Activated CD8-positive, alpha-beta memory T cell treated with anti-CD3 and anti-CD28 coated beads, Interleukin-2, amount 10 ng/mL, durations not matched to agents 7 days and 5 days (primary cell): ENCODE measurements at regions of chr7 and their contacts with region 1.

Region 1: DNA sequence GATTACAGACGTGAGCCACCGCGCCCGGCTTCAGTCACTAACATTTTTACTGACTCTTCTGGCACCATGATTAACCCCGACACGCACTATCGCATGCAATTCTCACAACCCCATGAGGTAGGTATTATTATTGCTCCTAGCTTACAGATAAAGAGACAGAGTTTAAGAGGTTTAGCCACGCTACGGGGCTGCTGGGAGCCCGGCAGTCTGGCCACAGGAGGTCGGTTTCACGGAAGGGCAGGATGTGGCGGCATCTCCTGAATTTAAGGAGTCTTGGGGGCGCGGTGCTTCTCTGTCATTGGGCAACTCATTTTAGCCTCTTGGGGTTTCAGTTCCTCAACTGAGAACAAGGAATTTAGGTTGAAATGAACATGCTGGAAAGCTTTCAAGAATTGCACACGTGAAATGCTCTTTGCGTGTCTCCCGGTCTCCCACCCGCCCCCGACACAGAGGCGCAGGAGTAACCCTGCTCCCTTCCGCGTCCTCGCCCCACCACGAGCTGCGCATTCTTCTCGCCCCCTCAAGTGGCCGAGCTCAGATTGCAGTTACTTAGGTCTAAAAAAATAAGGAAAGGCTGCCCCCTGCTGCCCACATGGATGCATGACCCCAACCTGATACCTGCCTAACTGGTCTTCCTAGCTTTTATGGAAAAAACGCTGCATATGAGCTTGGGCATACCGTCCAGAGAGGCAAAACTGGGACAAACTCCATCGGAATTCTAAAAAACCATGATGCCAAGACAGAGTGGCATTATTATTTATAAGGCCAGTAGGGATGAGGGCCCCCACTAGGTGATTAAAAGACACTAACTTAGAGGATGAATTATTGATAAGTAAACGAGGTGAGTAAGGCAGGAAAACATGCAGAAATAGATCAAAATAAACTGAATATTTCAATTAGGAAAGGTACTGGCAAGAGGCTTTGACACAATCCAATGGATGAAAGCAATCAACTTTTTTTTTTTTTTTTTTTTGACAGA is 12.4 kb downstream of the PRSS2 start:
- DNase-seq: peak; percentile 86
- ATAC-seq: peak; percentile 59
- H3K4me3 Mint-ChIP-seq: peak overlapping the region; percentile 67
- H3K27ac Mint-ChIP-seq: peak overlapping the region; percentile 85
- H3K4me1 Mint-ChIP-seq: peaks cover 30% of the 10 kb centered on the region
- H3K27me3 Mint-ChIP-seq: no peaks in the 10 kb centered on the region

Region 2: DNA sequence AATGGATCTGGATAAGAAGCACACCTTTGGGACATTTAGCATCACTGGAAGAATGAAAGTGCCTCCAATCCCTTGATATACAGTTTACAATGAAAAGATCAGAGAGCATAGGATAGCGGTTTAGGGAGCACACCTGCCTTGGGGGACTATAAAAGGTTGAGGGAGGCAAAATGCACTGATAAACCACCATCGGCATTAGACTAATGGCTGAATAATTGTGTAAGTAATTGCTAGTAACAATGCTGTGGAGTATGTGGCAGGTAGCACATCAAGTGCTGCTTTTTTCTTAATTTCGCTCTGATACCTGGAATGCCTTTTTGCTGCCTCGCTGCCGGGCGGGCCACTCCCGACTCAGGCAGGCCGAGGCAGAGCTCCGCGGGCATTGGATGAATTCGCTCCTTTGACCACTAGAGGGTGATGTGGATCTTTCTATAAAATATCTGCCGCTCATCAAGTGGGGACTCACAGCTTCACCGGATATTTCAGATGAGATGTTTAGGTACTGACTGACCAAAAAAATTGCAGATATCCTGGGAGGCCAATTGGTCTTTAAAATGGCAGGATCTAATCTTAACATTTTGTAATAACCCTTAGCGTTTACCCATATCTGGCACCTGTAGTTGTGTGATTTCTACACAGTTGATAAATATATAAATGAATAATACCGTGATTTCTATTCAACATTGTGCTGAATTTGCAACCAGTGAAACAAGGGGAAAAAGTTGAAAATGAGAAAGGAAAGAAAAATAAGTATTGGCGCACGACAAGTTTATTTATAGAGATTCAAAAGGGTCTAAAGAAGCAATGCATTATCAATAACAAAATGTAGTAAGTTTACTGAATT is 150.7 kb before region 1 on chr7:
- CTCF ChIA-PET with region 1: interaction called, 68 read pairs
- DNase-seq: peak; percentile 62
- ATAC-seq: peak; percentile 86
- H3K4me3 Mint-ChIP-seq: no peak overlapping the region
- H3K27ac Mint-ChIP-seq: no peak overlapping the region
- H3K4me1 Mint-ChIP-seq: peaks cover 11% of the 10 kb centered on the region
- H3K27me3 Mint-ChIP-seq: no peaks in the 10 kb centered on the region

Region 3: DNA sequence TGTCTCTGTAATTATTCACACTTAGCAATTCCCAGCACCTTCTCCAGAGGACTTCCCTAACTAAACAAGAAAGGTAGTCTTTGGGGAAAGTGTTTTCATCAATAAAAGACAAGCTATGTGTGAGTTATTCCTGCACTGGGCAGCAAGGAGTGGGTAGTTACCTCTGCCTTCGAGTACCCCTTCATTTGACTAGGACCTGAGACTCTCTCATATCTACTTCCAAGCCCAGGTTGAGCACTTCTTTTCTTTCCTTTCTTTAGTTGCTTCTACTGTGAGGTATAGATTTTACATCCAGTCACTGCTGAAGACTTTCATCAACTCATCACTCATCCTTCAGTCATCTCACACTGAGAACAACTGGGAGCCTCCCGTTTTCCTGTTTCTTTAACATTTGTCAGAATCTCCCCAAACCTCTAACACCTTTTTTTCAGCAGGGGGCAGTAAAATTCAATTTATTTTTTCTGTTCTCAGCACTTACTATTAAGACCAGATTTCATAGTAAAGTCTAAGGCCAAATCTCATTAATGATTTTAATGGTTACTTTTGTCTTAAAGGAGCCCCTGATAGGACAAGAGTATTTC is 114.0 kb before region 1 on chr7:
- CTCF ChIA-PET with region 1: interaction called, 44 read pairs
- DNase-seq: no peak
- ATAC-seq: peak; percentile 45
- H3K4me3 Mint-ChIP-seq: no peak overlapping the region
- H3K27ac Mint-ChIP-seq: peak overlapping the region; percentile 72
- H3K4me1 Mint-ChIP-seq: peaks cover 32% of the 10 kb centered on the region
- H3K27me3 Mint-ChIP-seq: no peaks in the 10 kb centered on the region

Region 4: GRCh38 chr7:142711746-142712619 is 71.2 kb before region 1 on chr7:
- CTCF ChIA-PET with region 1: interaction called, 32 read pairs
- DNase-seq: peak; percentile 77
- ATAC-seq: peak; percentile 83
- H3K4me3 Mint-ChIP-seq: peak overlapping the region; percentile 73
- H3K27ac Mint-ChIP-seq: peak overlapping the region; percentile 94
- H3K4me1 Mint-ChIP-seq: peaks cover 73% of the 10 kb centered on the region
- H3K27me3 Mint-ChIP-seq: no peaks in the 10 kb centered on the region

Region 5: GRCh38 chr7:142796608-142797385 is 13.6 kb after region 1 on chr7:
- CTCF ChIA-PET with region 1: interaction called, 15 read pairs
- DNase-seq: no peak
- ATAC-seq: peak; percentile 6
- H3K4me3 Mint-ChIP-seq: peak overlapping the region; percentile 100
- H3K27ac Mint-ChIP-seq: peak overlapping the region; percentile 92
- H3K4me1 Mint-ChIP-seq: peaks cover 70% of the 10 kb centered on the region
- H3K27me3 Mint-ChIP-seq: no peaks in the 10 kb centered on the region

Region 6: DNA sequence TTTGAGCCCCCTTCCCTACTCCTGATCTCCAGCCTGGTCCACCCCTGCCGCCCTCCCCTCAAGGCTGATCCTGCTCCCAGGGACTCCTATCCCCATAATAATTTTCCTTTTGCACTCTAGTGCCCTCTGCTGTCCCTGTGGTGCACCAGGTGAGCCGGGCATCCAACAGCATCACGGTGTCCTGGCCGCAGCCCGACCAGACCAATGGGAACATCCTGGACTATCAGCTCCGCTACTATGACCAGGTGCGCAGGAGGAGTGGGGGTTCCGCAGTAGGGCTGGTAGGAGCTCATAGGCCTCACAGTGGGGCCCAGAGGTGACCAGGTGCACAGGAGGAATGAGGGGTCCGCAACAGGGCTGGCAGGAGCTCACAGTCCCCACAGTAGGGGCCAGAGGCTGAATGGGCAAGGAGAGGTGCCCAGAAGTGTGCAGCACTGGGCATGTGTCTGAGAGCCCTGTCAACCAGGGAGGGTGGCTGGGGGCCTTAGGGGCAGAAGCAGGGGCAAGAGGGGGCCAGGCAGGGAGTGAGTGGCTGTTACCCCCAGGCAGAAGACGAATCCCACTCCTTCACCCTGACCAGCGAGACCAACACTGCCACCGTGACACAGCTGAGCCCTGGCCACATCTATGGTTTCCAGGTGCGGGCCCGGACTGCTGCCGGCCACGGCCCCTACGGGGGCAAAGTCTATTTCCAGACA is 83.3 kb after region 1 on chr7:
- CTCF ChIA-PET with region 1: no interaction called
- DNase-seq: peak; percentile 35
- ATAC-seq: peak; percentile 27
- H3K4me3 Mint-ChIP-seq: no peak overlapping the region
- H3K27ac Mint-ChIP-seq: no peak overlapping the region
- H3K4me1 Mint-ChIP-seq: no peaks in the 10 kb centered on the region
- H3K27me3 Mint-ChIP-seq: no peaks in the 10 kb centered on the region